Activated CD4-positive, alpha-beta memory T cell treated with anti-CD3 and anti-CD28 coated beads, Interleukin-2, amount 10 ng/mL, durations not matched to agents 7 days and 5 days (primary cell): ENCODE measurements at regions of chr6 and their contacts with region 1.

Region 1: DNA sequence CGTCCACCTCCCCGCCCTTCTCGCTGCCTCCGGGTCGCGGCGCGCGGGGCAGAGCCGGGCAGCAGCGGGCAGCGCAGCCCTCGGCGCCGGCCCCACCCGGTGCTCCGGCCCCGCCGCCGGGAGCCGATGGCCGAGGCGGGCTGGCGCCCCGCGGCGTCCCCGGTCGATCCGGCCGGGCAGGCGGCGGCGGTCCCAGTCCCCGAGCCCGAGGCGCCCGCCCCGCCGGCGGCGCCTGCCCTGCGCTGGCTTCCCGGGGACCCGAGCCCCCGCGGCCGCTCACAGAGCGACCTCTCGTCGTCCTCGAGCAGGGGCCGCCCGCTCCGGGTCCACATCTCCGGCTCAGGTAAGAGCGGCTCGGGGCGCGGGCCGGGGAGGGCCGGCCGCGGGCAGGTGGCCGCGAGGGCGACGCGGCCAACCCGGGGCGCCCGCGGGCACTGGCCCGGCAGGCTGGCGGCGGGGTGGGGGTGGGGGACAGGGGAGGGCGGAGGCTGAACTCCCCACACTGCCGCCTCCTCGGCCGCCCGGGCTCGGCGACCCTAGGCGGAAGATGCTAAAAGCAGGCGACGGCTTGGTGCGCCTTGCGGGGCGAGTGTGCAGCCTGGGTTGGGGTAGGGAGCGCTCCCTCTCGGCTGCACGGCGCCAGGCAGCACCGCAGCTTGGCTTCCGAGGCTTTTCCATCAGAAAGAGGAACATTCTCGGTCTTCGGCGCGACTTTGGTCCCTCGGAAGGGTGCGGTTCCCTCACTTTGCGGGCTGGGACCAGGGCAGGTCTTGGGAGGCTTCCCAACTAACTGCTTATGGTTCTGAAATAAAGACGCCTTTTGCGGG is 25.6 kb upstream of the FUCA2 start:
- DNase-seq: peak; percentile 71
- H3K4me3 Mint-ChIP-seq: peak overlapping the region; percentile 77
- H3K27ac Mint-ChIP-seq: peak overlapping the region; percentile 89
- H3K4me1 Mint-ChIP-seq: peaks cover 46% of the 10 kb centered on the region
- H3K27me3 Mint-ChIP-seq: no peaks in the 10 kb centered on the region

Region 2: GRCh38 chr6:143450453-143451371 is 86.4 kb before region 1 on chr6 and contains the starts of genes ADAT2 and PEX3:
- CTCF ChIA-PET with region 1: interaction called, 6 read pairs
- POLR2A ChIA-PET with region 1: interaction called, 45 read pairs
- DNase-seq: peak; percentile 95
- H3K4me3 Mint-ChIP-seq: peak within 1 kb of the TSS; percentile 92
- H3K27ac Mint-ChIP-seq: peak within 1 kb of the TSS; percentile 92
- H3K4me1 Mint-ChIP-seq: peaks cover 40% of the 10 kb centered on the region
- H3K27me3 Mint-ChIP-seq: no peaks in the 10 kb centered on the region
- total RNA-seq, gene ADAT2: 19.4 to 20.1 TPM
- total RNA-seq, gene PEX3: 14.1 to 15.9 TPM

Region 3: DNA sequence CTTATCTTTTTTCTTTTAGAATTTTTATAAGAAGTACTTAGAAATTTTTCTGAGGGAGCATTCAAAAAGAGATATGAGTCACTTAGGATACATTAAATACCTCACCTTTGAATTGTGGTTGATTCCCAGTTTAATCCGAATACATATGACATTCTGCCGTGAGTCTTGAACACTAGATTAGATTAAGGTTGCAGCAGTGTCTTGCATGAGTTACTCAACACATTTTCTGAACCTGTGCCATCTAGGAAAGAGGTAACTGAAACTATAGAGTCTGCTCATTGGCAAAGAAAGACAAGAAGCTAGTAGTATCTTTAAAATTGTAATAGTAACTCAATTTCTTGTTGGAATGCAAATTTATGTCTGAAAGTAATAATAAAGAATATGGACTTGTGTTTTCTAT is 71.5 kb before region 1 on chr6:
- CTCF ChIA-PET with region 1: no interaction called
- POLR2A ChIA-PET with region 1: no interaction called
- DNase-seq: no peak
- H3K4me3 Mint-ChIP-seq: no peak overlapping the region
- H3K27ac Mint-ChIP-seq: no peak overlapping the region
- H3K4me1 Mint-ChIP-seq: no peaks in the 10 kb centered on the region
- H3K27me3 Mint-ChIP-seq: no peaks in the 10 kb centered on the region

Region 4: GRCh38 chr6:143478479-143479062 is 58.5 kb before region 1 on chr6:
- CTCF ChIA-PET with region 1: no interaction called
- POLR2A ChIA-PET with region 1: no interaction called
- DNase-seq: no peak
- H3K4me3 Mint-ChIP-seq: no peak overlapping the region
- H3K27ac Mint-ChIP-seq: no peak overlapping the region
- H3K4me1 Mint-ChIP-seq: no peaks in the 10 kb centered on the region
- H3K27me3 Mint-ChIP-seq: no peaks in the 10 kb centered on the region

Region 5: DNA sequence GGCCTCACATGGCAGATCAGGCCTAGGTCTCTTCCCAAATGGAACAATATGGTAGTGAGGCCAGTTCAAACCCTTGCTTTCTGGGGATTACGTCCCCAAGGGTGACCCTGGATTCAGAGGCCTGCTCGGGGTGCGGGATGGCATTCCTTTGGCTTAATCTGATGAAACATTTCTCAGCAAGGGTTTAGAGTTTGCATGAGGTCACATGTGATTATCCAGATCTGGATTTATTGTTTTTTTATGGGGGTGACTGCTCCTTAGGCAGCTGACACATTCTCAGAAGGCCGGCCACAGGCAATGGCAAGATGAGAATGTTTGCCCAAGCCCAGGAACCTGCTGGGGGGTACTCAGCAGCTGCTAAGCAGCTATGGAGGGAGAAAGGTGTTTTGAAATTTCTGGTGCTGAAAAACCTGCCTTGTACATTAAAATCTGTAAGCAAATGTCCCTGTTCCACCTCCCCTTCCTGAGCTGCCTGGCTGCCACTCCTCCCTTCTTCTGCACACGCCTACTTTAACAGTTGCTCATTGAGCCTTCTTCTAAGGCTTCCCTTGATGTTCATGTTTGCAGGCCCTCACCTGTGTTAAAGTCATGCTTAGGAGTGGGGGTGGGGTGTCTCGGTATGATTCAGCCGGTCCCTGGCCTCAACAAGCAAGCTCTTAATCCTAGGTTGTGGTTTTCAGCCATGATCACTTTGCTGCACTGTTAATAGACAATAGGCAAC is 12.3 kb after region 1 on chr6:
- CTCF ChIA-PET with region 1: interaction called, 13 read pairs
- POLR2A ChIA-PET with region 1: interaction called, 56 read pairs
- DNase-seq: peak; percentile 55
- H3K4me3 Mint-ChIP-seq: no peak overlapping the region
- H3K27ac Mint-ChIP-seq: peak overlapping the region; percentile 42
- H3K4me1 Mint-ChIP-seq: peaks cover 83% of the 10 kb centered on the region
- H3K27me3 Mint-ChIP-seq: no peaks in the 10 kb centered on the region

Region 6: GRCh38 chr6:144063744-144064401 is 526.8 kb after region 1 on chr6:
- CTCF ChIA-PET with region 1: no interaction called
- POLR2A ChIA-PET with region 1: interaction called, 19 read pairs
- DNase-seq: peak; percentile 93
- H3K4me3 Mint-ChIP-seq: peak overlapping the region; percentile 79
- H3K27ac Mint-ChIP-seq: peak overlapping the region; percentile 58
- H3K4me1 Mint-ChIP-seq: peaks cover 46% of the 10 kb centered on the region
- H3K27me3 Mint-ChIP-seq: peaks cover 13% of the 10 kb centered on the region